SK-N-SH (cell line): ENCODE measurements at regions of chr22 and their contacts with region 1.

Region 1: GRCh38 chr22:22201185-22201929 is 43.2 kb upstream of the VPREB1 start:
- DNase-seq: peak; percentile 63
- H3K4me3 ChIP-seq: no peak overlapping the region; a peak in 1 of 4 replicates
- H3K27ac ChIP-seq: no peak overlapping the region
- H3K4me1 ChIP-seq: no peaks in the 10 kb centered on the region
- H3K27me3 ChIP-seq: peaks cover 50% of the 10 kb centered on the region
- CTCF ChIP-seq: peak; percentile 88
- EP300 ChIP-seq: no peak
- RAD21 ChIP-seq: peak; percentile 27; the same call in 1 of the 2 replicates

Region 2: GRCh38 chr22:22168190-22168940 is 33.0 kb before region 1 on chr22:
- CTCF ChIA-PET with region 1: interaction called, 13 read pairs
- POLR2A ChIA-PET with region 1: no interaction called
- DNase-seq: peak; percentile 16
- H3K4me3 ChIP-seq: peak overlapping the region; percentile 31 to 51; a peak in 2 of 4 replicates
- H3K27ac ChIP-seq: no peak overlapping the region
- H3K4me1 ChIP-seq: no peaks in the 10 kb centered on the region; a peak in 1 of 4 replicates
- H3K27me3 ChIP-seq: no peaks in the 10 kb centered on the region; the same call in 1 of the 2 replicates
- CTCF ChIP-seq: no peak
- EP300 ChIP-seq: no peak
- RAD21 ChIP-seq: no peak

Region 3: DNA sequence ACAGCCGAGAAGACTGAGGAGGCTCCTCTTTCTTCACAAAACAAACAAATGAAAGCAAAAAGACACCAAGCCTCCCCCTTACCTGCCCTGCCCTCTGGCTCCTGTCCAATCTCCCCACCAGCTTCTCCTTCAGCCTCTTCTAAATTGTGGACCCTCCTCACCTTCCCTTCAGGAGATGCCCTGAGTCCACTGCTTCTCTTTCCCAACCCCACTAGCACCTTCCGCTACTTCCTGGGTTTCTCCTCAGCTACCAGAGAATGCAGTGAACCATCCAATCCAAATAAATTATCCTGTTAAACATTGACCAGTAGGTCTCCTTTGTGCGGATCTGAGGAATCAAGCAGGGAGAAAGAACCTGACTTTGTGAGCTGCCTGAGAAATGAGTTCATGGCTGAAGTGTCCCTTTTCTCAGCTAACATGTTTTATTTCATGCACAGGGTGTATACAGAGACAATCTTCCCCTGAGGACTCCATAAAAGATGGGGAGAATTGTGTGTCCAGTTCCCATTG is 20.0 kb before region 1 on chr22:
- CTCF ChIA-PET with region 1: interaction called, 47 read pairs
- POLR2A ChIA-PET with region 1: no interaction called
- DNase-seq: no peak
- H3K4me3 ChIP-seq: no peak overlapping the region
- H3K27ac ChIP-seq: no peak overlapping the region
- H3K4me1 ChIP-seq: no peaks in the 10 kb centered on the region
- H3K27me3 ChIP-seq: peaks cover 28% of the 10 kb centered on the region
- CTCF ChIP-seq: no peak
- EP300 ChIP-seq: no peak
- RAD21 ChIP-seq: no peak

Region 4: DNA sequence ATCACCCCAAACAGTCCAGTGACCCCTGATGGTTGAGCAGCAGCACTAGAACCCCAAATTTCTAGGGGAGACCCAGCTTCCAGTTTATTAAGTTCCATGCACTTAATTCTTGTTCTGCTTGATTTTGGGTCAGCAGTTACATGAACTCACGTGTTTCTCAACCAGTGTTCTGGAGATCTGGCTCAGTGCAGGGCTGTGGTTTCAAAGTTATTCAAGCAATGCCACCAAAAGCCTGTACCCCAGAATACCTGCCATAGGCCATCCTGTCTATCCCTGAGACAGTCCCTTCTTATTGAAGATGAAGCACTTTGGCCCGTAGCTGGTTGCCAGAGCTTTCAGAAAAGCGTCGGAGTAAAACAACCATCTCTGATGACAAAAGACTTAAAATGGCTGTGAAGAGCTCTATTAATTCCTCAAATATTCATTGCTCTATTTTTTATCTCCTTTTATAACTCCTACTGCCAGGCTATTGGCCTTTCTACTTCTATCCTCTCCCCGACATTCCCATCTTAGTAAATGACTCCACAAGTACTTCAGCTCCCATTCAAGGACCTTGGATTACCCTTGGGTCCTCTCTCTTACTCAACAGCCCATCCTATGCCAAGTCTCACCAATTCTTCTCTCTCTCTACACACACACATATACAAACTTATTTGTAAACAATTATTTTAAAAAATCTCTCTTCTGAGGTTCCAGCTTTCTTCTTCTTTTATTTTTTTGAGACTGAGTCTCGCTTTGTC is 25.3 kb after region 1 on chr22:
- CTCF ChIA-PET with region 1: interaction called, 13 read pairs
- POLR2A ChIA-PET with region 1: no interaction called
- DNase-seq: no peak
- H3K4me3 ChIP-seq: no peak overlapping the region
- H3K27ac ChIP-seq: no peak overlapping the region
- H3K4me1 ChIP-seq: no peaks in the 10 kb centered on the region
- H3K27me3 ChIP-seq: peaks cover 29% of the 10 kb centered on the region; the same call in 1 of the 2 replicates
- CTCF ChIP-seq: no peak
- EP300 ChIP-seq: no peak
- RAD21 ChIP-seq: no peak

Region 5: DNA sequence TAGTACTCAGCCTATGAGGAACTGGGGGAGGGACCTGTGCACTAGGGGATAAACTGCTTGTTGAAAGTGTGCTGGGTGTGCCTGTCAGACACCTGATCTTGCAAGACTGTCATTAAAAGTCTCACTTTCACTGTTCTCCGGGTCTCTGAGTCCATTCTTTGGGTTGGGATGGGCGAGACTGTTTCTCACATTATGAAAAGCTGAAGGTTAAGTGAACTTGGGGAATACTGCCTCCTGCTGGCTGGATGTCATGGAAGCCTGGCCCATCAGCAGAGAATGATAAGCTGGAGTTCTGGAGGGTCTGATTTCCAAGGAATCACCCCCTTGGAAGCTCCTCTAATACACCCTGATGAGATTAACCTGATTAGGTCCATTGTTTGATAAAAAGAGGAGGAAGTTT is 34.2 kb after region 1 on chr22:
- CTCF ChIA-PET with region 1: interaction called, 21 read pairs
- POLR2A ChIA-PET with region 1: interaction called, 4 read pairs
- DNase-seq: peak; percentile 30
- H3K4me3 ChIP-seq: no peak overlapping the region; a peak in 1 of 4 replicates
- H3K27ac ChIP-seq: no peak overlapping the region
- H3K4me1 ChIP-seq: no peaks in the 10 kb centered on the region
- H3K27me3 ChIP-seq: peaks cover 32% of the 10 kb centered on the region; the same call in 1 of the 2 replicates
- CTCF ChIP-seq: peak; percentile 64
- EP300 ChIP-seq: no peak
- RAD21 ChIP-seq: peak; percentile 40

Region 6: DNA sequence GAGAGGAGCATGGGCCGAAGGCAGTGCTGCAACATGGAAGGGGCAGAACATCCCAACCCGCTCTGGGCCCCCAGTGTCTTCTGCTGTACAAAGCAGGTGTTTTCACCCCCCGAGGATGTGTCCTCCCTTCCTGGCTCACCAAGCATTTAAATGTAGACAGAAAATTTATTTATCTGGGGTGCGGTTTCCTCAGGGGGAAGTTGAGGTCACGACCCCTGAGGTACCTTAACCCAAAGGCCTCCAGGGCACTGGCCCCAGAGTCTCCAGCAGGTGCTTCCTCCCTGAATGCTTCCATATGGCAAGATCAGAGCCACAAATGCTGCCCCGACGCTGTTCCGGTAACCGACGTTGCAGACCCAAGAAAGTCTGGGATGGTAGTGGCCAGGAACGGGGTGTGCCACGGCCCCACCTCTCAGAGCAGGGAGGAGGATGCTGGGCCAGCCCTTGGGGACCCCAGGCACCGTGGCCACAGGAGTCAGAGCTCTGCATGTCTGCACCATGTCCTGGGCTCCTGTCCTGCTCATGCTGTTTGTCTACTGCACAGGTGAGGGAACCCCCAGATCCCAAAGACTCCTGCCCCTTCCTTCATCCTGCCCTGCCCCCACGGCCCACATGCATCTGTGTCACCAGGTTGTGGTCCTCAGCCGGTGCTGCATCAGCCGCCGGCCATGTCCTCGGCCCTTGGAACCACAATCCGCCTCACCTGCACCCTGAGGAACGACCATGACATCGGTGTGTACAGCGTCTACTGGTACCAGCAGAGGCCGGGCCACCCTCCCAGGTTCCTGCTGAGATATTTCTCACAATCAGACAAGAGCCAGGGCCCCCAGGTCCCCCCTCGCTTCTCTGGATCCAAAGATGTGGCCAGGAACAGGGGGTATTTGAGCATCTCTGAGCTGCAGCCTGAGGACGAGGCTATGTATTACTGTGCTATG is 43.2 kb after region 1 on chr22 and contains the start of gene VPREB1:
- CTCF ChIA-PET with region 1: interaction called, 13 read pairs
- POLR2A ChIA-PET with region 1: no interaction called
- DNase-seq: no peak
- H3K4me3 ChIP-seq: no peak within 1 kb of the TSS
- H3K27ac ChIP-seq: no peak within 1 kb of the TSS
- H3K4me1 ChIP-seq: no peaks in the 10 kb centered on the region
- H3K27me3 ChIP-seq: peaks cover 45% of the 10 kb centered on the region
- CTCF ChIP-seq: no peak
- EP300 ChIP-seq: no peak
- RAD21 ChIP-seq: no peak
- polyA plus RNA-seq, gene VPREB1: not detected in 2 replicates